ENCODE measurements at regions of chr10 and their contacts with region 1.

Region 1: DNA sequence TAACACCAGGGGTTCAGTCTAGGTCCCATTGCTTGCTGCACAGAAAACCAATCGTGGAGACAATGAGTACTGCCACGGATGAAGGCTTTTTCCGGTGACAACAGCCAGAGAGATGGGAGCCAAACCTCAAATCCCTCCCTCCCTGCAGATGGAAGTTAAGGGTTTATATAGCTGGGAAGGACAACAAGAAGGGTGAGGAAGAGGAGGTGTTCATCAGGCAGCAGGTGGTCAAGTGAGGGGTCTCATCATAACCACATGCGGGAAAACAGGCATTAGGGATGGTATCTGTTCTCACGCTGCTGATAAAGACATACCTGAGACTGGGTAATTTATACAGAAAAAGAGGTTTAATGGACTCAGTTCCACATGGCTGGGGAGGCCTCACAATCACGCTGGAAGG is 91.3 kb downstream of the MKX start:
- DNase-seq: no peak
- H3K4me3 ChIP-seq: no peak overlapping the region
- H3K27ac ChIP-seq: no peak overlapping the region
- H3K4me1 ChIP-seq: no peaks in the 10 kb centered on the region
- H3K27me3 ChIP-seq: no peaks in the 10 kb centered on the region
- CTCF ChIP-seq: no peak
- EP300 ChIP-seq: no peak
- POLR2A ChIP-seq: no peak

Region 2: DNA sequence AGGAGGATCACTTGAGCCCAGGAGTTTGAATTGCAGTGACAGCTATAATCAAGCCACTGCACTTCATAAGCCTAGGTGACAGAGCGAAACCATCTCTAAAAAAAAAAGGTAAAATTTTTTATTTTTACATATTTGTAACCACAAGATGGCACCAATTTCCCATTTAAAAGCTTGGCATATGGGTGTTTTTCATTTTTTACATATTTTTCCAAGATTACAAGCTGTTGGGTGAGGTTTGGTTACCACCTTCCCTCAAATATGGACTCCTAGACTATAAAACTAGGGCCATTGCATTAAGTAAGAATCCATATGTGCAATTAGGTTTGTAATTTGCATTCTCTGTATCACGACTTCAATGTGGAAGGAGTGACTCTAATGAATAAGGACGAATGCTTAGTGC is 284.4 kb before region 1 on chr10:
- in situ Hi-C with region 1: no loop called
- intact Hi-C with region 1: no loop called
- DNase-seq: no peak
- H3K4me3 ChIP-seq: no peak overlapping the region
- H3K27ac ChIP-seq: no peak overlapping the region
- H3K4me1 ChIP-seq: no peaks in the 10 kb centered on the region
- H3K27me3 ChIP-seq: no peaks in the 10 kb centered on the region
- CTCF ChIP-seq: peak in 1 of 5 experiments; percentile 8
- EP300 ChIP-seq: no peak
- POLR2A ChIP-seq: no peak

Region 3: DNA sequence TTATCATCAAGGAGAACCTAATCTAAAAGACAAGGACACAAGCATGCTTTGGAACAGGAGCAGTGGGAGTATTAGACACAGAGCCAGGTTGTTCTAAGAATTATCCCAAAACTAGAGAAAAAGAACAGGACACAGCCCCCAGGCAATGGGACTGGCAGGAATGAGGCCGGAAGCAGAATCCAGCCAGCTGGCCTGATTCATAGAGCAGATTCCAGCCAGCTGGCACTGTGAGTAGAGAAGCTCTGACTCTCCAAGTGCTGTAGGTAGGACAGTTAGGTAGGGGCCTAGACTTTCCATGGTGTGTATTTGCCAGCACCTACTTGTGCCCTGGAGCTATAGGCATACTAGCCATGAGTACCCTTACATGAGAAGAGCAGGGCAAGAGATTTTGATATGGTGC is 163.5 kb before region 1 on chr10:
- in situ Hi-C with region 1: no loop called
- intact Hi-C with region 1: no loop called
- DNase-seq: no peak
- H3K4me3 ChIP-seq: no peak overlapping the region
- H3K27ac ChIP-seq: no peak overlapping the region
- H3K4me1 ChIP-seq: no peaks in the 10 kb centered on the region
- H3K27me3 ChIP-seq: no peaks in the 10 kb centered on the region
- CTCF ChIP-seq: no peak
- EP300 ChIP-seq: no peak
- POLR2A ChIP-seq: no peak

Region 4: GRCh38 chr10:27558612-27559020 is 95.7 kb before region 1 on chr10:
- in situ Hi-C with region 1: loop called in 3 of 4 experiments (anchors 5 to 25 kb)
- intact Hi-C with region 1: no loop called
- DNase-seq: peak; percentile 58
- H3K4me3 ChIP-seq: no peak overlapping the region
- H3K27ac ChIP-seq: no peak overlapping the region
- H3K4me1 ChIP-seq: peaks cover 0 to 2% (median 0%) of the 10 kb centered on the region in 4 donors
- H3K27me3 ChIP-seq: no peaks in the 10 kb centered on the region
- CTCF ChIP-seq: peak; percentile 57 to 78 (median 74)
- EP300 ChIP-seq: no peak
- POLR2A ChIP-seq: no peak

Region 5: DNA sequence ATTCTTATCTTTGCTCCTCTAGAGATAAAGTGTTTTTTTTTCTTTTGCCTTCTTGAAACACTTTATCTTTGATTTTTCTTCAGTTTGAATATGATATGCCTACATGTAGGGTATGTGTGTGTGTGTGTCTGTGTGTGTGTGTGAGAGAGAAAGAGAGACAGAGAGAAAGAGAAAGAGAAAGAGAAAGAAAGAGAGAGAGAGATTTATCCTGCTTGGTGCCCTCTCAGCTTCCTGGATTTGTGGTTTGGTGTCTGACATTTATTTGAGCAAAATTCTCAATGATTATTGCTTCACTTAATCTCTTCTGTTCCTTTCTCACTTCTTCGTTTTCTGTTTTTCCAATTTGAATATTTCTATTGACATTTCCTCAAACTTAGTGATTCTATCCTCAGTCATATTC is 89.9 kb before region 1 on chr10:
- in situ Hi-C with region 1: loop called in 3 of 4 experiments (anchors 5 to 25 kb)
- intact Hi-C with region 1: no loop called
- DNase-seq: no peak
- H3K4me3 ChIP-seq: no peak overlapping the region
- H3K27ac ChIP-seq: no peak overlapping the region
- H3K4me1 ChIP-seq: no peaks in the 10 kb centered on the region
- H3K27me3 ChIP-seq: no peaks in the 10 kb centered on the region
- CTCF ChIP-seq: no peak
- EP300 ChIP-seq: no peak
- POLR2A ChIP-seq: no peak